ENCODE measurements at regions of chr14 and their contacts with region 1.

Region 1: GRCh38 chr14:90697577-90698206 is 118.5 kb downstream of the TTC7B start:
- DNase-seq: peak; percentile 71 to 74
- ATAC-seq: peak; percentile 96 to 99
- H3K4me3 ChIP-seq: no peak overlapping the region
- H3K27ac ChIP-seq: no peak overlapping the region
- H3K4me1 ChIP-seq: no peaks in the 10 kb centered on the region
- CTCF ChIP-seq: peak; percentile 86
- EP300 ChIP-seq: no peak
- POLR2A ChIP-seq: no peak
- RAD21 ChIP-seq: peak; percentile 88 to 89

Region 2: DNA sequence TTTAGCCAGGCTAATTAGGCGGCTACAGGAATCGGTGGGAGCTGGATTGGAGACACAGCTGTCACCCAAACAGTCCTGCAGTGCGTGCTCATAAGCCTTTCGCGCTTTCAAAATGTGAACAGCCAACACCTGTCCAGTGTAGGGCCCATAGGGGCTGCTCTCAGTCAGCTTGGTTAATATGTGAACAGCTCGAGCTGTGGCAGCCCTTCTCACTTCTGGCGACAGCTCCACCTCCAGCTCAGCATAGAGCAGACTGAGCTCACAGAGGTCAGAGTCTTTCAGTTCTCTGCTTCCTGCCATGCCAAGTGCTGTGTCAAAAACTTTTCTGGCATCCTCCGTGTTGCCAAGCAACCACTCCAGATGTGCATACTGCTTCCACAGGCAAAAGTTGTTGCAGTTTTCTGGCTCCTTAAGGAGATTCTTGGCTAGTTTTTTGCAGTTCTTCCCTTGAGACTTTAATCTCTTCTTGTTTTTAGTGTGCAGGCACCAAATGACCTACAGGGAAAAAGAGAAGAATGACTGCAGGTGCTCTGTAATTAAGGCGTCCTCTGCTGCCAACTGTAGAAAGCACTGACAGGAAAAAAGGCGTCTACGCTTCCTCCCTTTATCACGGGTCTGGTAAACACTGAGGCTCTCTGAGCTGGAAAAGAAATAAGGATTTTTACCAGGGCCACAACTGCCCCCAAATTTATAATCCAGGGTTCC is 408.9 kb before region 1 on chr14:
- CTCF ChIA-PET with region 1: interaction called, 16 read pairs
- POLR2A ChIA-PET with region 1: no interaction called
- DNase-seq: no peak
- ATAC-seq: no peak
- H3K4me3 ChIP-seq: no peak overlapping the region
- H3K27ac ChIP-seq: no peak overlapping the region
- H3K4me1 ChIP-seq: no peaks in the 10 kb centered on the region
- CTCF ChIP-seq: no peak
- EP300 ChIP-seq: no peak
- POLR2A ChIP-seq: no peak
- RAD21 ChIP-seq: no peak

Region 3: DNA sequence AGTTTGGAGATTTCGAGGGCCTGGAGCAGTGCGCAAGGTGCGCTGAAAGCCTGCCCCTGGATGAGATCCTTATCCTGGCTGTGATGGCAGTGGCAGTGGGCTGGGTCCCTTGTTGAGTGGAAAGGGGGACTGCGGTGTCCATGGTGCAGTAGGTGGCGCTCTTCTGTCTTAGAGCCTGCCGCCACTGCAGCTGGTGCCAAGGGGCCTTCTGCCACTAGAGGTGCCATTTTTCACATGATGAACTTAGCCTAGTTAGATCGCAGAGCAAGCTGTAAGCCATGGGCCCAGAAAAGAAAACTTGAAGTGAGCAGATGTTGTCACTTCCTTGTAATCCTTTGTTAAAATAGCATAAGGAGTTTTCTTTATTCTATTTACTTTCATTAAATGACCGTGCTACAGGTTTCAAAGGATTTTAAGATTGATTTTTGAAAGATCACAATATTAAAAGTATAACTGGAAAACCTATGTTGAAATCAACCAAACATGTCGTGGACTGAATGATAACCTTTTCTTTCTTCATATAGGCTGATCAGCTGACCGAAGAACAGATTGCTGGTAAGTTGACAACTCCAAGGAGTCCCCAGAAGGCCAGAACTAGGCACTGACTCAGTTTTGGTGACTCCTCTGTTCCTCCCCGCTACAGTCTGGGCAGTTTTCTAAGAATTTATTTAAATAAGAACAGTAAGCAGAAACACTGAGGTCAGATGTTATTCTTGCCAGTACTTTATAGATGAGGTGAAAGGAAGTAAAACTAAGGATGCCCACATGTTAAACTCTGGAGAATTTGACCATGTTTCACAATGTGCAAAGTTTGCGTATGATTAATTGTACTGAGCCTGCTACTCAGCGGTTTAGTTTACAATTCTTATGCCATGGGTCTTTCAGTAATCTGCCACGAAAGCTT is 297.9 kb before region 1 on chr14:
- CTCF ChIA-PET with region 1: interaction called, 79 read pairs
- POLR2A ChIA-PET with region 1: interaction called, 10 read pairs
- DNase-seq: peak; percentile 93 to 98
- ATAC-seq: peak; percentile 73 to 79
- H3K4me3 ChIP-seq: peak overlapping the region; percentile 88; the same call in 1 of the 3 replicates
- H3K27ac ChIP-seq: peak overlapping the region in 1 of 2 experiments; percentile 18; a peak in 1 of 6 replicates
- H3K4me1 ChIP-seq: peaks cover 31% of the 10 kb centered on the region
- CTCF ChIP-seq: peak; percentile 99
- EP300 ChIP-seq: no peak
- POLR2A ChIP-seq: no peak
- RAD21 ChIP-seq: peak; percentile 88 to 89

Region 4: DNA sequence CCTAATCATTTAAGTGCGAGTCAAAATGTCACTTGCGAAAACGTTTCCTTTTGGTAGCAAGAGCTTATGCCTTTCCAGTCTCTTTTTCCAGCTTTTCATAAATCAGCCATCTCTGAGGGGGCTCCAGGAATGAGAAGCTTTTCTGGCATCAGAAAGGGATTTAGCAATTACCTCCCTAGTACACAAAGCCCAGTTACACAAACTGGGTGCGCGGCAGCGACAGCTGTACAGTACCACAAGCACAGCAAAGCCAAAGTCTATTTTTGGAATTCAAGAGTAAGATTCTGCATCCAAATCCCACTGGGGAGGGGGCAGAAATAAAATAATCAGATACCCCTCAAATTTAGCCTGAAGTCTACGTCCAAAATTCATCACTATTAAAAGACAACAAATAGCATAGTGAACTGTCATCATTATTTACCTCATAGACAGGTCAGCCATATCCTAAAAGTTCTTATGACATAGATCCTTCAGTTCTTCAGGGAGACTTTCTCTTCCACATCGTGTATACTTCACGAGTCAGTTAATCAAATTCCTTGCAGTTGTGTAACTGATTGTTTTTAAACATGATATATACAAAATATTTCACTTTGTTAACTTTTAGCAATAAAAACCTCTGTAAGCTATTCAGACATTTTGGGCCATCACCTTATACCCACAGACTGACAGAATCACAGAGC is 32.2 kb before region 1 on chr14:
- CTCF ChIA-PET with region 1: interaction called, 12 read pairs
- POLR2A ChIA-PET with region 1: no interaction called
- DNase-seq: no peak
- ATAC-seq: no peak
- H3K4me3 ChIP-seq: no peak overlapping the region
- H3K27ac ChIP-seq: no peak overlapping the region
- H3K4me1 ChIP-seq: no peaks in the 10 kb centered on the region
- CTCF ChIP-seq: no peak
- EP300 ChIP-seq: no peak
- POLR2A ChIP-seq: no peak
- RAD21 ChIP-seq: no peak

Region 5: DNA sequence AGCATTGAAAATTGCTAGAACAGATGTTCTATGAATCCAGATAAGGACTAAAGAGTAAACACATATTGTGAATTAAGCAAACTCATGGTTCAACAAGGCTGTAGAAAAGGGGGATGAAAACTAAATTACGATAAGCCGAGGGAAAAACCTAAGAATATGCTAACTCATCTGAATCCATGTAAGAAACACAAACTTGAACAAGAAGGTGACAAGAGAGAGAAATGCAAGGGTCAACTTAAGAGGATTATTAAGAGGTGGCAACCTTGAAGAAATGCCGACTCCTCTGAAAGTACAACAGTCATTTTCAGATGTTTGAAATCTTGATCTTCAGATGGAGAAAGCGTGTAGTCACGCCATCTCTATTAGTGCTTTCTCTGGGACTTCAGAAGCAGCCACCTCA is 10.0 kb before region 1 on chr14:
- CTCF ChIA-PET with region 1: interaction called, 17 read pairs
- POLR2A ChIA-PET with region 1: no interaction called
- DNase-seq: no peak
- ATAC-seq: no peak
- H3K4me3 ChIP-seq: no peak overlapping the region
- H3K27ac ChIP-seq: no peak overlapping the region
- H3K4me1 ChIP-seq: no peaks in the 10 kb centered on the region
- CTCF ChIP-seq: no peak
- EP300 ChIP-seq: no peak
- POLR2A ChIP-seq: no peak
- RAD21 ChIP-seq: no peak